Endothelial cell of umbilical vein (primary cell): ENCODE measurements at regions of chr3 and their contacts with region 1.

Region 1: GRCh38 chr3:25038922-25039321 is 389.1 kb upstream of the RARB start:
- DNase-seq: no peak
- H3K4me3 ChIP-seq: no peak overlapping the region
- H3K27ac ChIP-seq: no peak overlapping the region
- H3K4me1 ChIP-seq: no peaks in the 10 kb centered on the region
- H3K27me3 ChIP-seq: no peaks in the 10 kb centered on the region
- CTCF ChIP-seq: no peak
- POLR2A ChIP-seq: no peak

Region 2: GRCh38 chr3:25074149-25074548 is 35.2 kb after region 1 on chr3:
- CTCF ChIA-PET with region 1: interaction called, 5 read pairs
- POLR2A ChIA-PET with region 1: no interaction called
- dilution Hi-C with region 1: no loop called
- intact Hi-C with region 1: loop called (anchors 2 kb)
- DNase-seq: no peak
- H3K4me3 ChIP-seq: no peak overlapping the region
- H3K27ac ChIP-seq: no peak overlapping the region
- H3K4me1 ChIP-seq: no peaks in the 10 kb centered on the region
- H3K27me3 ChIP-seq: no peaks in the 10 kb centered on the region
- CTCF ChIP-seq: no peak
- POLR2A ChIP-seq: no peak

Region 3: GRCh38 chr3:25133588-25133987 is 94.7 kb after region 1 on chr3:
- CTCF ChIA-PET with region 1: interaction called, 4 read pairs
- POLR2A ChIA-PET with region 1: interaction called, 10 read pairs
- dilution Hi-C with region 1: no loop called
- intact Hi-C with region 1: no loop called
- DNase-seq: no peak
- H3K4me3 ChIP-seq: no peak overlapping the region
- H3K27ac ChIP-seq: no peak overlapping the region
- H3K4me1 ChIP-seq: no peaks in the 10 kb centered on the region
- H3K27me3 ChIP-seq: no peaks in the 10 kb centered on the region
- CTCF ChIP-seq: no peak
- POLR2A ChIP-seq: no peak